Natural killer cell (primary cell): ENCODE measurements at regions of chr2 and their contacts with region 1.

Region 1: DNA sequence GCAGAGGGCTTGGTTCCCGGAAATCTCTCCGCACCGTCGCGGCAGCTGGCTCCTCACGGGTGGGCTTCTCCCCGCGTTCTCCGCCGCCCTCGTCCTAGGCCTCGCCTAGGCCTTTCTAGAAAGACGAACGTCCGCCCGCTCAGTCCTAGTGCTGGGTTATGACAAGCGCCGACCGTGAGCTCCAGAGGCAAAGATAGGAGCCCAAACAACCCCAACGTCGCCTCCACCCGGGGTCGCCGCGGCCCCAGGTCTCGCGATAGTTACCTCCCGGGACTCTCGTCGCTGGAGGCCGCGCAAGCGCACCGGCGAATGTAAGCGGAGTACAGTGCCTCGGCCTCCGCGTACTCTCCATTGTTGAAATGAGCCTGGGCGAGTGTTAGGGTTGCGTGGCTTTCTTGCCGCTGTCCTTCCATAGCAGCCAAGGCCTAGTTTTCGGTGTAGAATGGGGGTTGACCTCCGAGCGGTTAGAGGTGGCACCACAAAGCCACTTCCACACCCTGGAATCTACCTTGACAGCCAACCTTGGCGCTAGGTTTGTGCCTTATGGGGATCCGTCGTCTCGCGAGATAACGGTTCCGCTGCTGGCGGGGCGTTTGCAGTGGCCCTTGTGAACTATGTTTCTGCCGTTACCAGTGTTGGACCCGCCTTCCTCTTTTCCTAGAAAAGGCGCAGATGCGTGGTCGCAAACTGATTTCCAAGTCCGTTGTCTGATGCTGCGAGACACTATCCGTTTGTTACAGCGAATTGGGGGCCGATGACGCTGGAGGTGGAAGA is at the start of gene TTC32:
- DNase-seq: peak; percentile 94 to 97
- ATAC-seq: peak; percentile 90 to 94 (median 90)
- H3K4me3 ChIP-seq: peak within 1 kb of the TSS; percentile 86
- H3K4me3 Mint-ChIP-seq: peak within 1 kb of the TSS; percentile 95
- H3K27ac ChIP-seq: peak within 1 kb of the TSS; percentile 98
- H3K27ac Mint-ChIP-seq: peak within 1 kb of the TSS; percentile 94 to 97
- H3K4me1 ChIP-seq: peaks cover 11% of the 10 kb centered on the region
- H3K4me1 Mint-ChIP-seq: peaks cover 29 to 39% of the 10 kb centered on the region in 2 donors
- H3K27me3 ChIP-seq: no peaks in the 10 kb centered on the region
- H3K27me3 Mint-ChIP-seq: peaks cover 6 to 19% of the 10 kb centered on the region in 2 donors
- CTCF ChIP-seq: no peak
- total RNA-seq, gene TTC32: 30.4 to 45.3 (median 37.2) TPM

Region 2: GRCh38 chr2:19347619-19348562 is 553.7 kb before region 1 on chr2:
- intact Hi-C with region 1: loop called (anchors 5 kb)
- DNase-seq: peak; percentile 98 to 99
- ATAC-seq: peak; percentile 88 to 96 (median 89)
- H3K4me3 ChIP-seq: peak overlapping the region; percentile 79
- H3K4me3 Mint-ChIP-seq: peak overlapping the region; percentile 96
- H3K27ac ChIP-seq: peak overlapping the region; percentile 84
- H3K27ac Mint-ChIP-seq: peak overlapping the region; percentile 95 to 98
- H3K4me1 ChIP-seq: peaks cover 39% of the 10 kb centered on the region
- H3K4me1 Mint-ChIP-seq: peaks cover 17 to 33% of the 10 kb centered on the region in 2 donors
- H3K27me3 ChIP-seq: peaks cover 39% of the 10 kb centered on the region
- H3K27me3 Mint-ChIP-seq: peaks cover 19 to 28% of the 10 kb centered on the region in 2 donors
- CTCF ChIP-seq: no peak

Region 3: GRCh38 chr2:19989681-19990415 is 88.2 kb after region 1 on chr2 and contains the start of gene WDR35:
- intact Hi-C with region 1: loop called (anchors 5 kb)
- DNase-seq: peak; percentile 92 to 94
- ATAC-seq: peak; percentile 92 to 98 (median 93)
- H3K4me3 ChIP-seq: peak within 1 kb of the TSS; percentile 90
- H3K4me3 Mint-ChIP-seq: peak within 1 kb of the TSS; percentile 95
- H3K27ac ChIP-seq: peak within 1 kb of the TSS; percentile 78
- H3K27ac Mint-ChIP-seq: peak within 1 kb of the TSS; percentile 88 to 89
- H3K4me1 ChIP-seq: peaks cover 13% of the 10 kb centered on the region
- H3K4me1 Mint-ChIP-seq: peaks cover 24 to 36% of the 10 kb centered on the region in 2 donors
- H3K27me3 ChIP-seq: peaks cover 3% of the 10 kb centered on the region
- H3K27me3 Mint-ChIP-seq: peaks cover 16 to 28% of the 10 kb centered on the region in 2 donors
- CTCF ChIP-seq: no peak
- total RNA-seq, gene WDR35: 5.8 to 8.3 (median 7.7) TPM

Region 4: DNA sequence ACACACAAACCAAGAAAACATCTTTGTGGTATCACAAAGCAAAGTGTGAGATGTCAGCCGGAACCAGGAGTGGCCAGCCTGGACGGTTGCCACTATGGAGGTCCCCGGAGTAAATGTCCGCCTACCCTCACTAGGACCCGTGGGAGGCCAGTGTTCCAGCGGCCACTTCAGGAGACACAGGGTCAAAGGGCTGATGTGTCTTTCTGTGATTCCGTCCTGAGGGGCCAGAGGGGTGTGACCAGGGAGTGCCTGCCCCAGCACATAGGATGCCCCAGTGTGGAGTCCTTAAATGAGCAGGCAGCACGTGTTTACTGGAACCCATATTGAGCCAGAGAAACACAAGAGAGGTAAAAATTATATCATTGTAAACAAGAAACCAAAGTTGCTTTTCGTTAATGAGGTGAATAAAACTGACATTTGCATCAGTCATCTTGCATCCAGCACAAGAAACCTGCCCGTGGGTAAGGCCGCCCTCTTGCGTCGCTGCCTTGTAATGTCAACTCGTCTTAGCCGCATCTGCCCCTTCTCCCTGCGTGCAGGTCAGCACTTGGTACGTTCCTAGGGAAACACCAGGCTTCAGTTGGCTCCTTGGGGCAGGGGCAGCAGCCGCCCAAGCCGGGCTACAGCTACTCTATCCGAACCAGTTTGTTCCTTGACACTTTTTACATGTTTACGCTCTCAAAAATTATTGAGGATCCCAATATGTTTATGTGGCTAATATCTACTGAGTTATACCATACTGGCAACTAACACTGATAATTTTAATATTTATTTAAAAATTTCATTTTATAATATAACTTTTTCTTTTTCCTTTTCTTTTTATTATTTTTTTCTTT is 196.5 kb after region 1 on chr2:
- intact Hi-C with region 1: loop called (anchors 2 kb)
- DNase-seq: peak; percentile 59 to 85
- ATAC-seq: peak; percentile 86 to 100 (median 98)
- H3K4me3 ChIP-seq: no peak overlapping the region
- H3K4me3 Mint-ChIP-seq: no peak overlapping the region
- H3K27ac ChIP-seq: no peak overlapping the region
- H3K27ac Mint-ChIP-seq: no peak overlapping the region
- H3K4me1 ChIP-seq: no peaks in the 10 kb centered on the region
- H3K4me1 Mint-ChIP-seq: peaks cover 0 to 6% of the 10 kb centered on the region in 2 donors
- H3K27me3 ChIP-seq: no peaks in the 10 kb centered on the region
- H3K27me3 Mint-ChIP-seq: peaks cover 0 to 16% of the 10 kb centered on the region in 2 donors
- CTCF ChIP-seq: peak; percentile 72

Region 5: GRCh38 chr2:20446917-20447436 is 545.3 kb after region 1 on chr2 and contains the start of gene RHOB:
- intact Hi-C with region 1: loop called (anchors 5 kb)
- DNase-seq: peak; percentile 94 to 95
- ATAC-seq: peak; percentile 94 to 99 (median 94)
- H3K4me3 ChIP-seq: peak within 1 kb of the TSS; percentile 61
- H3K4me3 Mint-ChIP-seq: peak within 1 kb of the TSS; percentile 88
- H3K27ac ChIP-seq: peak within 1 kb of the TSS; percentile 71
- H3K27ac Mint-ChIP-seq: peak within 1 kb of the TSS; percentile 63 to 84
- H3K4me1 ChIP-seq: peaks cover 20% of the 10 kb centered on the region
- H3K4me1 Mint-ChIP-seq: peaks cover 8% of the 10 kb centered on the region in 2 donors
- H3K27me3 ChIP-seq: peaks cover 3% of the 10 kb centered on the region
- H3K27me3 Mint-ChIP-seq: peaks cover 0 to 10% of the 10 kb centered on the region in 2 donors
- CTCF ChIP-seq: no peak
- total RNA-seq, gene RHOB: 50.8 to 222 (median 64.7) TPM